ENCODE measurements at regions of chr1 and their contacts with region 1.

Region 1: DNA sequence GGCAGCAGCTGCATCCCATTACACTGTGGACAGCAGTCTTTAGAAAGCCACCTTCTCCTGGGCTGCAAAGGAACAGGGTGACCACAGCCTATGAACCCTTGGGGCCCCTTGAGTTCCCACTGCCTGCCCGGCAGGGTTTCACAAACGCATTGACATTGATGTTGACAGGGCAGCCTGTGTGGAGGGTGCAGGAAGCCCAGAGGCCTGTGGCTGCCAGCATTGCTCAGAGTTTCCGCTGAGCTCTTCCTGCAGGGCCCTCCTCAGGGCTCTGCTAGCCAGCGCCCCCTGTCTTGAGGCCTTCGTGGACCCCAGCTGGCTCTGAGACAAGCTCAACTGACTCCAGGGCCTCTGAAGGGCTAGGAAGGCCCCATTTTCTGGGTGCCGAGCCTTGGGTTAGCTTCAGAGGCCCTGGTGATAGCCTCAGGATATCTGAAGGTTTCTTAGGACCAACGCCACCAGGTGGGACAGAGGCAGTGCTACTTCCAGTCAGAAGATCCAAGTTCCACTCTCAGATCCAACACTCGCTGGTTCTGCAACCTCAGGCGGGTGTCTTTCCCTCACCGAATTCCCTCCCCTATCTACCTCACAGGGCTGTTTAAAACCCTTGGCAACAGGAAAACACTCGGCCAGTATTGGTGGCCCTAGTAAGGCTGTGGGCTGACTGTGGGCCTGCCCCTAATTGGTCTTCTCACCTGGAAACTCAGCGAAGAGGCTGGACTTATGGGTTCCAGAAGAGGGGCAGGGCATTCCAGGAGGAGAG is 27.2 kb upstream of the EPS8L3 start:
- DNase-seq: no peak
- H3K4me3 ChIP-seq: no peak overlapping the region
- H3K27ac ChIP-seq: no peak overlapping the region
- H3K4me1 ChIP-seq: peaks cover 0 to 18% (median 7%) of the 10 kb centered on the region in 4 experiments; a peak in 6 of 7 replicates
- H3K27me3 ChIP-seq: peaks cover 0 to 3% (median 2%) of the 10 kb centered on the region in 4 experiments; a peak in 2 of 7 replicates
- CTCF ChIP-seq: peak; percentile 31 to 65 (median 54)
- EP300 ChIP-seq: no peak
- POLR2A ChIP-seq: no peak
- RAD21 ChIP-seq: peak; percentile 14 to 50; a peak in 3 of 4 replicates

Region 2: DNA sequence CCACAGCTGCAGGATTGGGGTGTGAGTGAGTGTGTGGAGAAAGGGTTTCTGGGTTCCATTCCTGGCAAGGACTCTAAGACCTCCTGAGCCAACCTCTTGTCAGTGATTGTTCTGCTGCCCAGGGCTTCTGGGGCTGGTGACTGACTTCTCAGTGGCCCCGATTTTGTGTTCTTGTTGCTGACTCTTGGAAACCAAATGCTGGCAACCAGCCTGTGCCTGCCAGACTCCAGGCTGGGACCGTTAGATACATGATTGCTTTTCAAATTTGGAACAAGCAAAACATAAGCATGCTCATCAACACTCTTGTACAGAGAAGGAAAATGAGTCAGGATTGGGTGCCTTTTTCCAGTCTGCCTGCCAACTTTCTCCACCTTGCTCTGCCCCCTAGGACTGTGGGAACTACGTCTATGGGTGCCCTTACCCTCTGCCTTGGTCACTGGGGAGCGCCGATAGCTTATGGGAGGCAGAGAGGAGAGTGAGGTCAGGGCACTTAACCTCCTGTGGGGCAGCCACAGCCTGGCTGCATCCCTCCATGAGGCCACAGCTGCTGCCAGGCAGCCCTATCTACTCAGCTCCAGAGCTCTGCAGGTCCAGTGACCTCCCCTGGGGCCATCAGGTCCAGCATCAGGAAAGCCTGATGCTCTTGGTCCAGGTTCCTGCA is 12.1 kb after region 1 on chr1:
- CTCF ChIA-PET with region 1: interaction called, 31 read pairs
- POLR2A ChIA-PET with region 1: interaction called, 4 read pairs
- DNase-seq: no peak
- H3K4me3 ChIP-seq: no peak overlapping the region
- H3K27ac ChIP-seq: no peak overlapping the region
- H3K4me1 ChIP-seq: no peaks in the 10 kb centered on the region
- H3K27me3 ChIP-seq: no peaks in the 10 kb centered on the region
- CTCF ChIP-seq: no peak
- EP300 ChIP-seq: no peak
- POLR2A ChIP-seq: no peak
- RAD21 ChIP-seq: no peak

Region 3: GRCh38 chr1:109850827-109851226 is 59.9 kb after region 1 on chr1:
- CTCF ChIA-PET with region 1: interaction called, 19 read pairs
- POLR2A ChIA-PET with region 1: no interaction called
- DNase-seq: no peak
- H3K4me3 ChIP-seq: no peak overlapping the region
- H3K27ac ChIP-seq: no peak overlapping the region
- H3K4me1 ChIP-seq: no peaks in the 10 kb centered on the region
- H3K27me3 ChIP-seq: no peaks in the 10 kb centered on the region
- CTCF ChIP-seq: no peak
- EP300 ChIP-seq: no peak
- POLR2A ChIP-seq: no peak
- RAD21 ChIP-seq: no peak

Region 4: GRCh38 chr1:109910123-109910962 is 119.4 kb after region 1 on chr1 and contains the start of gene CSF1:
- CTCF ChIA-PET with region 1: interaction called, 11 read pairs
- POLR2A ChIA-PET with region 1: interaction called, 3 read pairs
- DNase-seq: peak in 1 of 2 experiments; percentile 62
- H3K4me3 ChIP-seq: peak within 1 kb of the TSS; percentile 47 to 69 (median 56)
- H3K27ac ChIP-seq: no peak within 1 kb of the TSS
- H3K4me1 ChIP-seq: peaks cover 2 to 25% (median 13%) of the 10 kb centered on the region in 4 experiments
- H3K27me3 ChIP-seq: peaks cover 7 to 47% (median 34%) of the 10 kb centered on the region in 4 experiments
- CTCF ChIP-seq: no peak
- EP300 ChIP-seq: no peak
- POLR2A ChIP-seq: no peak; a peak in 1 of 3 replicates
- RAD21 ChIP-seq: 0 out of 4 replicates have a peak, but pooled peaks of 1 of the 2 experiments have one; percentile 5
- total RNA-seq, gene CSF1: 2.0 and 3.3 TPM in 2 replicates

Region 5: DNA sequence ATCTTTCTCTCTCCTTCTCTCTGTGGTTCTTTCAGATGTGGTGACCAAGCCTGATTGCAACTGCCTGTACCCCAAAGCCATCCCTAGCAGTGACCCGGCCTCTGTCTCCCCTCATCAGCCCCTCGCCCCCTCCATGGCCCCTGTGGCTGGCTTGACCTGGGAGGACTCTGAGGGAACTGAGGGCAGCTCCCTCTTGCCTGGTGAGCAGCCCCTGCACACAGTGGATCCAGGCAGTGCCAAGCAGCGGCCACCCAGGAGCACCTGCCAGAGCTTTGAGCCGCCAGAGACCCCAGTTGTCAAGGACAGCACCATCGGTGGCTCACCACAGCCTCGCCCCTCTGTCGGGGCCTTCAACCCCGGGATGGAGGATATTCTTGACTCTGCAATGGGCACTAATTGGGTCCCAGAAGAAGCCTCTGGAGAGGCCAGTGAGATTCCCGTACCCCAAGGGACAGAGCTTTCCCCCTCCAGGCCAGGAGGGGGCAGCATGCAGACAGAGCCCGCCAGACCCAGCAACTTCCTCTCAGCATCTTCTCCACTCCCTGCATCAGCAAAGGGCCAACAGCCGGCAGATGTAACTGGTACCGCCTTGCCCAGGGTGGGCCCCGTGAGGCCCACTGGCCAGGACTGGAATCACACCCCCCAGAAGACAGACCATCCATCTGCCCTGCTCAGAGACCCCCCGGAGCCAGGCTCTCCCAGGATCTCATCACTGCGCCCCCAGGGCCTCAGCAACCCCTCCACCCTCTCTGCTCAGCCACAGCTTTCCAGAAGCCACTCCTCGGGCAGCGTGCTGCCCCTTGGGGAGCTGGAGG is 132.4 kb after region 1 on chr1:
- CTCF ChIA-PET with region 1: interaction called, 15 read pairs
- POLR2A ChIA-PET with region 1: no interaction called
- DNase-seq: peak; percentile 34 to 87
- H3K4me3 ChIP-seq: no peak overlapping the region
- H3K27ac ChIP-seq: no peak overlapping the region
- H3K4me1 ChIP-seq: no peaks in the 10 kb centered on the region; a peak in 1 of 7 replicates
- H3K27me3 ChIP-seq: no peaks in the 10 kb centered on the region
- CTCF ChIP-seq: peak; percentile 87 to 92 (median 91)
- EP300 ChIP-seq: no peak
- POLR2A ChIP-seq: no peak
- RAD21 ChIP-seq: peak; percentile 78 to 88

Measured in H1 (cell line).